Activated CD4-positive, alpha-beta T cell treated with anti-CD3 and anti-CD28 coated beads for 36 hours (primary cell): ENCODE measurements at regions of chr7 and their contacts with region 1.

Region 1: GRCh38 chr7:149624419-149625339 is 127.1 kb upstream of the ZNF746 start:
- DNase-seq: peak; percentile 95
- ATAC-seq: peak; percentile 86
- H3K4me3 Mint-ChIP-seq: peak overlapping the region; percentile 80
- H3K27ac Mint-ChIP-seq: peak overlapping the region; percentile 80
- H3K4me1 Mint-ChIP-seq: peaks cover 38% of the 10 kb centered on the region
- H3K27me3 Mint-ChIP-seq: peaks cover 3% of the 10 kb centered on the region

Region 2: DNA sequence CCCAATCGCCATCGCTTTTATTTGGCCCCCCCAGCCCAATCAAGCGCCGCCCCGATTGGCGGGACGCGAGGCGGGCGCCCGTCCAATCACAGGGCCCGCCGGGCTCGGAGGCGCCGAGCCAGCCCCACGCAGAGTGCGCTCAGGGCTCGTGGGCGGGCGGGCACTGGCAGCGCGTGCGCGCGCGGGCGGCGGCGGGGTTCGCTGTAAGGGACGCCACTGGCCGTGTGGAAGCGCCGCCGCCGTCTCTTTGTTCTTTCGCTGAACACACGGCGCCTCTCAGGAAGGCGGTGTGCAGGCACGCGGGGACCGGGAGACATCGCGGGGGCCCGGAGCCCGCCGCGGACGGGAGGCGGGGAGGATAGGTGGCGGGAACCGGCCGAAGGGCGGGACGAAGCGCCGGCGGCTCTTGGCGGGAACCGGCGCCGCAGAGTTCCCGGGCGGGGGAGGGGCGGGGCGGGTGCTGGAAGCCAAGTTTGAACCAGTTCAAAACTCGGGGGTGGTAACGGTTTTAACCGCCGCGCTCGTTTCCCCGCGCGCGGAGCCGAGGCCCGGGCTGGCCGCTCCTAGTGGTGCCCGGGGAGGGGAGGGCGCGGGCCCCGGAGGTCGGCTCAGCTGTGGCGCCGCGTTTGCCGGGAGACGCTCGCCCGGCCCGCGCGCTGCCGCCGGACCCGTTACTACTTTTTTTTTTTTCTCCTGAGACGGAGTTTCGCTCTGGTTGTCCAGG is 740.2 kb before region 1 on chr7:
- CTCF ChIA-PET with region 1: no interaction called
- POLR2A ChIA-PET with region 1: no interaction called
- intact Hi-C with region 1: loop called in 1 of 2 experiments (anchors 10 kb)
- DNase-seq: peak; percentile 97
- ATAC-seq: peak; percentile 92
- H3K4me3 Mint-ChIP-seq: peak overlapping the region; percentile 95
- H3K27ac Mint-ChIP-seq: peak overlapping the region; percentile 99
- H3K4me1 Mint-ChIP-seq: peaks cover 34% of the 10 kb centered on the region
- H3K27me3 Mint-ChIP-seq: no peaks in the 10 kb centered on the region

Region 3: DNA sequence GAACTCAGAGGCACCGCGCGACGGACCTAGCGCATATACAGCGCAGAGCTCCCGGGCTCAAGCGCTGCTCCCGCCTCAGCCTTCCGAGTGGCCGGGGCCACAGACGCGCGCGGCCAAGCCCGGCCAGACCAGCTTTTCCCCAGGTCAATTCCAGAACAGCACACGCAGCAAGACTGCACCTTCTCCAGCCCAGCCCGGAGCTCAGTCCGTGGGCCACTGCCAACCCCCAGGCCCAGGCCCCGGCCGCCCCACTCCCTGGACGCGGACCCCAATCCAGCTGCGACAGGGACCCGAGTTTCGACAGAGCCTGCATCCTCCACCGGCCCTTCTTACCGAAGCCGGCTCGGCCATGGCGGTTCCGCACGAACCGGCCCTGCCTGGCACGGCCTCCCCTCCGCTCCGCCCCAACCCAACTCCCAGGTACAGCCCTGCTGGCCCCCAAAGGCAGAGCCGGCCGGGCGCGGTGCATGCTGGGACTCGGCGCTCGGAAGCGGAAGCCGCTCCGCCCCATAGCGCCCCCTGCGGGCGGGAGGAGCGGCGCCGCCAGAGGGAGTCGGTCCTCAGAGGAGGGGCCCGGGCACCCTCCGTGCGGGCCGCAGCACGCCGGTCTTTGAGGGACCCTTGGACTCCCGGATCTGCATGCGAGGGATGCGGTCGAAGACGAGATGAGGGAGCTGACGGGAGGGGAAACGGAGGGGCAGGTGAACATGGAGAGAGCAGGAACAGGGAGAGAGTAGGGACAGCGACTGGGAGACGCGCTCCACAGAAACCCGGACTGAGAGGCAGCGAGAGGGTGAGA is 498.6 kb before region 1 on chr7 and contains the start of gene ZNF425:
- CTCF ChIA-PET with region 1: no interaction called
- POLR2A ChIA-PET with region 1: no interaction called
- intact Hi-C with region 1: loop called in 1 of 2 experiments (anchors 2 kb)
- DNase-seq: peak; percentile 96
- ATAC-seq: peak; percentile 88
- H3K4me3 Mint-ChIP-seq: peak within 1 kb of the TSS; percentile 83
- H3K27ac Mint-ChIP-seq: peak within 1 kb of the TSS; percentile 99
- H3K4me1 Mint-ChIP-seq: peaks cover 21% of the 10 kb centered on the region
- H3K27me3 Mint-ChIP-seq: no peaks in the 10 kb centered on the region
- total RNA-seq, gene ZNF425: 0.43 to 0.95 TPM

Region 4: DNA sequence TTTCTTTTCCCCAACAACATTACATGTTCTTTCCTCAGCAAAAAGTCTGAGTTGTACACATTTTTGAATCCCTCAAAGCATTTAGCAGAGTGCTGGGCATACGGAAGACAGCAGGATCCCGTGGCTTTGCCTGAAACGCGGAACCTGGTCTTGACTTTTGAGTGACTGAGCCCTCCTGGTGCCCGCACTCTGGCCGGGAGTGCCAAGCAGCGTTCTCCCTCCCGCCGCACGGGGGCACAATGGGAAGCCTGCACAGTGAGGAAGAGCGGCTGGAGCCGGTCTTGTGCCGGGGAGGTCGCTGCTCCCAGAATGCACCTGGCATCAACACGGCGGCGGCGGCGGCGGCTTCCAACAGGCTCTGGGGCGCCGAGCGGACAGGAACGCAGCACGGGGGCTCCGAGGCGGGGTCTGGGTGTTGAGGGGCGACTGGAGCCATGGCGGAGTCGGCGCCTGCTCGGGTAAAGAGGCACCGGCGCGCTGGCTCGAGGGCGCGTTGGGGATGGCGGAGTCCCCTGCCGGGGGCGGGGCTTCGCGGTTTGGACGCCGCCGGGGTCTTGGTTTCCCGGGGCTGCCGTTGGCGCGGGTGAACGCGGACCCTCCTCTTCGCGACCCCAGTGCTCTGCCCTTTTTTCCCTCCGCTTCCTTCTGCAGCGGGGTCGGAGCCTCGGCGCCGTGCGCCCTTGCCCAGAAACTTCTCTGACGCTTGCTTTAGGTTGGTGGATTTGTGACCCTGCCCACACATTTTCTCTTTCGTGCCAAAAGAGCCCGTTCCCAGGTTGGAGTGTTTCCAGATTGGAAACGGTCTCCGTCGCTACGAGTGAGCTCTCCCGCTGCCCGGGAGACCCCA is 385.1 kb before region 1 on chr7 and contains the start of gene ZNF212:
- CTCF ChIA-PET with region 1: no interaction called
- POLR2A ChIA-PET with region 1: interaction called, 6 read pairs
- intact Hi-C with region 1: loop called in 1 of 2 experiments (anchors 1 kb)
- DNase-seq: peak; percentile 95
- ATAC-seq: peak; percentile 98
- H3K4me3 Mint-ChIP-seq: peak within 1 kb of the TSS; percentile 93
- H3K27ac Mint-ChIP-seq: peak within 1 kb of the TSS; percentile 83
- H3K4me1 Mint-ChIP-seq: peaks cover 32% of the 10 kb centered on the region
- H3K27me3 Mint-ChIP-seq: no peaks in the 10 kb centered on the region
- total RNA-seq, gene ZNF212: 9.9 to 15.9 TPM

Region 5: GRCh38 chr7:149460493-149461277 is 164.0 kb before region 1 on chr7 and contains the start of gene ZNF777:
- CTCF ChIA-PET with region 1: interaction called, 5 read pairs
- POLR2A ChIA-PET with region 1: interaction called, 3 read pairs
- intact Hi-C with region 1: loop called in 1 of 2 experiments (anchors 1 kb)
- DNase-seq: peak; percentile 90
- ATAC-seq: peak; percentile 96
- H3K4me3 Mint-ChIP-seq: peak within 1 kb of the TSS; percentile 84
- H3K27ac Mint-ChIP-seq: peak within 1 kb of the TSS; percentile 87
- H3K4me1 Mint-ChIP-seq: peaks cover 21% of the 10 kb centered on the region
- H3K27me3 Mint-ChIP-seq: peaks cover 10% of the 10 kb centered on the region
- total RNA-seq, gene ZNF777: 13.3 to 16.4 TPM

Region 6: GRCh38 chr7:149873074-149873969 is 248.6 kb after region 1 on chr7 and contains the start of gene ATP6V0E2:
- CTCF ChIA-PET with region 1: no interaction called
- POLR2A ChIA-PET with region 1: interaction called, 4 read pairs
- intact Hi-C with region 1: loop called in 1 of 2 experiments (anchors 5 kb)
- DNase-seq: peak; percentile 96
- ATAC-seq: peak; percentile 84
- H3K4me3 Mint-ChIP-seq: peak within 1 kb of the TSS; percentile 82
- H3K27ac Mint-ChIP-seq: peak within 1 kb of the TSS; percentile 91
- H3K4me1 Mint-ChIP-seq: peaks cover 74% of the 10 kb centered on the region
- H3K27me3 Mint-ChIP-seq: no peaks in the 10 kb centered on the region
- total RNA-seq, gene ATP6V0E2: 33.9 to 41.3 TPM